ENCODE measurements at regions of chr9 and their contacts with region 1.

Region 1: DNA sequence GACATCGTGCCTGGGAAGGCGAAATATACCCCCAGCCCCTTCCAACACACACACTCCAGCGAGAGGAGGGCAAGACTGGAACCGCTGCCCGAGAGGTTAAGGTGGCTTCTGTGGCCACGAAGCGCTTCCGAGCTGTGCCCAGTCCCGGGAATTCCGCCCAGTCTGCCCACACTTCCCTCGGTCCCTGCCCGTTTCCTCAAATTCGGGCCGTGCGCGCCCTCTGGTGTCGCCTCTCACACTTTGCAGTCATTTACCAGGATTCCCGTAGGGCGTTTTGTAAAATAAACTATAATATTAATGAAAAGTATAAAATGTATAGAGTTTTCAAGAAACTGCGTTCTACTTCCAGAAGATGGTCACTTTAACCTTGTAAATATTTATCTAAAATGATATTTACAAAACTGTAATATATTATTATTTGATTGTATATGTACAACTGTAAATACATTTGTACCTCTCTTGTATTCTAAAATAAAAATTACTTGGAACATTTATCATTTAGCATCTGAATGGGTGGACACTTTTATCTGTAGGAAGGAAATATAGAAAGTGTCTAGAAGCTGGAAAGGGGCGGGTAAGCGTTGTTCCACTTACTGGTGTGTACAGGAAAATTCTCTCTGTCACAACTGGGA is 11.0 kb upstream of the EXOSC2 start:
- DNase-seq: peak; percentile 67
- ATAC-seq: peak; percentile 62
- H3K4me3 ChIP-seq: peak overlapping the region; percentile 14; the same call in 1 of the 2 replicates
- H3K27ac ChIP-seq: no peak overlapping the region
- H3K4me1 ChIP-seq: peaks cover 5% of the 10 kb centered on the region
- H3K27me3 ChIP-seq: peaks cover 15% of the 10 kb centered on the region
- CTCF ChIP-seq: peak; percentile 86
- POLR2A ChIP-seq: no peak
- RAD21 ChIP-seq: peak; percentile 86

Region 2: GRCh38 chr9:129981180-129981907 is 701.3 kb before region 1 on chr9:
- CTCF ChIA-PET with region 1: no interaction called
- POLR2A ChIA-PET with region 1: no interaction called
- dilution Hi-C with region 1: no loop called
- in situ Hi-C with region 1: no loop called
- intact Hi-C with region 1: no loop called
- DNase-seq: no peak
- ATAC-seq: no peak
- H3K4me3 ChIP-seq: no peak overlapping the region
- H3K27ac ChIP-seq: no peak overlapping the region
- H3K4me1 ChIP-seq: no peaks in the 10 kb centered on the region
- H3K27me3 ChIP-seq: no peaks in the 10 kb centered on the region
- CTCF ChIP-seq: no peak
- POLR2A ChIP-seq: no peak
- RAD21 ChIP-seq: no peak

Region 3: DNA sequence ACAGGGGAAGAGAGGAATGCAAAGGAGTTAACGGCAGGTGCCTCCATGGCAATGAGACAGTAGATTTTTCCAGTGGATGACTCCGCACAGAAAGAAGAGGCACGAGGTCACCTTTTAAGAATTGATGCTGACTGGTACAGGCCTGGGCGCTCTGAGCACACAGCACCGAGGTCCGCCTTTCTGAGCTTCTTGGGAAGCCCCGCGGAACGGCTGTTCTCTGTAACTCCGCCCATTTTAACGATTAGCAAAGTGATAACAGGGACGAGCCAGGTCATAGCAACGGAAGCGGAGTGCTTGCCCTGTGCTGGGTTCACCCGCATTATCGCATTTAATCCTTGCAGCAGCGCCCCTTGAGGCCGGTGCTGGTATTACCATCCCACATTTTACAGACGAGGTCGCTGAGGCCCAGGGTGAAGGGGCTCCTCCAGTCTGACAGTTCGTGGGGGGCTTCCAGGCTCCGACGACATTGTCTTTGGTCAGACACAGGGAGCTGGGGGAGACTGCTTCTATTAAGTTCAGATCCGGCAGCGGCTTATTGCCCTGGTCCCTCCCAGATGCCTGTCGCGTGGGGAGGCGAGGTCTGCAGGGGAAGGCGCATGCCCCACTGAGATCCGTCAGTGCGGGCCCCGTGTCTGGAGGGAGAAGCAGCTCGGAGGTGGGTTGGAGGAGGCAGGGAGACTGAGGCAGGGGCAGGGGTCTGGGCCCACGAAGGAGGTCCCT is 439.4 kb before region 1 on chr9:
- CTCF ChIA-PET with region 1: no interaction called
- POLR2A ChIA-PET with region 1: no interaction called
- dilution Hi-C with region 1: no loop called
- in situ Hi-C with region 1: no loop called
- intact Hi-C with region 1: loop called (anchors 10 kb)
- DNase-seq: peak; percentile 25
- ATAC-seq: peak; percentile 86
- H3K4me3 ChIP-seq: no peak overlapping the region
- H3K27ac ChIP-seq: no peak overlapping the region
- H3K4me1 ChIP-seq: peaks cover 3% of the 10 kb centered on the region; the same call in 1 of the 2 replicates
- H3K27me3 ChIP-seq: no peaks in the 10 kb centered on the region
- CTCF ChIP-seq: peak; percentile 81
- POLR2A ChIP-seq: no peak
- RAD21 ChIP-seq: peak; percentile 68

Region 4: DNA sequence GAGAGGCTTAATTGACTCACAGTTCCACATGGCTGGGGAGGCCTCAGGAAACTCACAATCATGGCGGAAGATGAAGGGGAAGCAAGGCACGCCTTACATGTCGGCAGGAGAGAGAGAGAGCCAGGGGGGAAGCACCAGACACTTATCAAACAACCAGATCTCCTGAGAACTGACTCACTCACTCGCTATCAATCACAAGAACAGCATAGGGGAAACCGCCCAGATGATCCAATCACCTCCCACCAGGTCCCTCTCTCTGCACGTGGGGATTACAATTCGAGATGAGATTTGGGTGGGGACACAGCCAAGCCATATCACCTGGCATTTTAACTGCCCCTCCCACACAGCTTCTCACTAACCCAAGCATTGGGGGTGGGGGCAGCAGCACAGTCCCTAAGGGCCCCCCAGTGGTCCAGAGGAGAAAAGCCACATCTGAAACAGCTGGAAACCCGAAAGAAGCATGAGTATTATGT is 313.9 kb before region 1 on chr9:
- CTCF ChIA-PET with region 1: no interaction called
- POLR2A ChIA-PET with region 1: no interaction called
- dilution Hi-C with region 1: no loop called
- in situ Hi-C with region 1: no loop called
- intact Hi-C with region 1: loop called (anchors 10 kb)
- DNase-seq: no peak
- ATAC-seq: no peak
- H3K4me3 ChIP-seq: no peak overlapping the region
- H3K27ac ChIP-seq: no peak overlapping the region
- H3K4me1 ChIP-seq: no peaks in the 10 kb centered on the region
- H3K27me3 ChIP-seq: peaks cover 39% of the 10 kb centered on the region
- CTCF ChIP-seq: peak; percentile 9; the same call in 1 of the 2 replicates
- POLR2A ChIP-seq: no peak
- RAD21 ChIP-seq: no peak

Region 5: GRCh38 chr9:130461218-130461630 is 221.4 kb before region 1 on chr9:
- CTCF ChIA-PET with region 1: interaction called, 7 read pairs
- POLR2A ChIA-PET with region 1: no interaction called
- dilution Hi-C with region 1: no loop called
- in situ Hi-C with region 1: no loop called
- intact Hi-C with region 1: loop called (anchors 1 kb)
- DNase-seq: peak; percentile 12
- ATAC-seq: peak; percentile 86
- H3K4me3 ChIP-seq: no peak overlapping the region
- H3K27ac ChIP-seq: no peak overlapping the region
- H3K4me1 ChIP-seq: no peaks in the 10 kb centered on the region
- H3K27me3 ChIP-seq: peaks cover 10% of the 10 kb centered on the region
- CTCF ChIP-seq: peak; percentile 87
- POLR2A ChIP-seq: no peak
- RAD21 ChIP-seq: peak; percentile 93

Region 6: DNA sequence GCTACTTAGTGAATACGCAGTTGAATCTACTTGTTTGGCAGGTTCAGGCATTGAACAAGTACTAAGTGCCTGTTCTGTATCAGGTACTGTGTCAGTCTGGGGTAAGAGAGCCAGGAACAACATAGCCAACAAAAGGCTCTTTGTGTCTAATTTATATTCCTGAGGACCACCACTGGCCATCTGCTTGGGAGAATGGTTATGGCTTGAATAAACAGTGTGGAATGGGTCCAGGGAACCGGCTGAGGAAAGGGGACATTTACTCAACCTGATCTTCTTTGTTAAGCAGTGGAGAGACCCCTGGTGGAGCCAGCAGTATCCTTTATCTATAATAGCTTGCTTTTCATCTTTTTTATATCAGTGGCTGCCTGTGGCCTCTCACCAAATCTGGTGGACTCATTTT is 49.5 kb after region 1 on chr9:
- CTCF ChIA-PET with region 1: no interaction called
- POLR2A ChIA-PET with region 1: interaction called, 12 read pairs
- dilution Hi-C with region 1: no loop called
- in situ Hi-C with region 1: no loop called
- intact Hi-C with region 1: no loop called
- DNase-seq: peak; percentile 31
- ATAC-seq: no peak
- H3K4me3 ChIP-seq: no peak overlapping the region
- H3K27ac ChIP-seq: no peak overlapping the region
- H3K4me1 ChIP-seq: peaks cover 6% of the 10 kb centered on the region
- H3K27me3 ChIP-seq: no peaks in the 10 kb centered on the region
- CTCF ChIP-seq: peak; percentile 22; the same call in 1 of the 2 replicates
- POLR2A ChIP-seq: no peak
- RAD21 ChIP-seq: no peak

Region 7: GRCh38 chr9:131138676-131139075 is 456.1 kb after region 1 on chr9:
- CTCF ChIA-PET with region 1: no interaction called
- POLR2A ChIA-PET with region 1: no interaction called
- dilution Hi-C with region 1: no loop called
- in situ Hi-C with region 1: no loop called
- intact Hi-C with region 1: no loop called
- DNase-seq: no peak
- ATAC-seq: no peak
- H3K4me3 ChIP-seq: no peak overlapping the region
- H3K27ac ChIP-seq: no peak overlapping the region
- H3K4me1 ChIP-seq: no peaks in the 10 kb centered on the region
- H3K27me3 ChIP-seq: no peaks in the 10 kb centered on the region
- CTCF ChIP-seq: no peak
- POLR2A ChIP-seq: no peak
- RAD21 ChIP-seq: no peak

Measured in IMR-90 (cell line).